Pancreas (tissue), 10 donors: ENCODE measurements at regions of chr9 and their contacts with region 1.

Region 1: DNA sequence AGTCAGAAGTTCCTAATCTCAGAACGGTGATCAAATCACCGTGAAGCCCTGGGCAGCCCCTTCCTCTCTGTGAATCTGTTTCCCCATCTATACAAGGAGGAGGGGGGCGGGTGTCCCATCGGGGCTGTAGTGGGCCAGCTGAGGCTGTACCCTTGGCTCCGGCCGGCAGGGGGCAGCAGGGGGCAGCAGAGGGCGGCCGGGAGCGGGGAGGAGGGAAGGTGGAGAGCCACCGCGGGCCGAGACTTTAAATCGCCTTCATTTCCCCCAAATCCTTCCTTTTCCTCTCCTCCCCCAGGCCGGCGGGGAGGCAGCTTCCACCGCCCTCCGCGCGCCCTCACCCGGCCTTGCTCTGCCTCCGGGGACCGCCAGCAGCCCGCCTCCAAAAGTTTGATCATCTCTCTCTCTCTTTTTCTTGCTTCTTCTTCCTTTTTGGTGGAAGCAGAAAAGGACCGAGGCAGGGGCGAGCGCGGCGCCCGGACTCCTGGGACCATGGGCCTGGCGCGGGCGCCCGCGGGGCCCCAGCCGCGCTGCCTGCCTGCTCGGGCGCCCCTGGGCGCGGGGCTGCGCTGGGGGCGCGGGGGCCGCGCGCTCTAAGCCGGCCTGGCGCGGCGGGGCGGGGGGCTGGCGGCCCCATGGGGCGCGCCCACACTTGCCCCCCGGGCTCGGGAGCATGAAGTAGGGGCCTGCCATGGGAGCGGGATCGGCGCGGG is at the start of gene COL27A1:
- DNase-seq: peak; percentile 78 to 98 (median 87)
- ATAC-seq: peak; percentile 87 to 94 (median 89)
- H3K4me3 ChIP-seq: peak within 1 kb of the TSS; percentile 54 to 79 (median 74)
- H3K27ac ChIP-seq: peak within 1 kb of the TSS in 2 of 4 donors; percentile 48 to 54
- H3K4me1 ChIP-seq: peaks cover 0 to 10% (median 9%) of the 10 kb centered on the region in 3 donors
- H3K27me3 ChIP-seq: peaks cover 0 to 2% (median 0%) of the 10 kb centered on the region in 4 donors
- CTCF ChIP-seq: peak; percentile 79 to 93 (median 90)
- total RNA-seq, gene COL27A1: 9.7 to 31.8 (median 17.3) TPM

Region 2: GRCh38 chr9:114275246-114276004 is 120.0 kb after region 1 on chr9:
- intact Hi-C with region 1: loop called in 1 of 3 experiments (anchors 2 kb)
- DNase-seq: peak in 2 of 6 donors; percentile 38 to 75
- ATAC-seq: no peak
- H3K4me3 ChIP-seq: no peak overlapping the region
- H3K27ac ChIP-seq: no peak overlapping the region
- H3K4me1 ChIP-seq: no peaks in the 10 kb centered on the region
- H3K27me3 ChIP-seq: no peaks in the 10 kb centered on the region
- CTCF ChIP-seq: no peak

Region 3: DNA sequence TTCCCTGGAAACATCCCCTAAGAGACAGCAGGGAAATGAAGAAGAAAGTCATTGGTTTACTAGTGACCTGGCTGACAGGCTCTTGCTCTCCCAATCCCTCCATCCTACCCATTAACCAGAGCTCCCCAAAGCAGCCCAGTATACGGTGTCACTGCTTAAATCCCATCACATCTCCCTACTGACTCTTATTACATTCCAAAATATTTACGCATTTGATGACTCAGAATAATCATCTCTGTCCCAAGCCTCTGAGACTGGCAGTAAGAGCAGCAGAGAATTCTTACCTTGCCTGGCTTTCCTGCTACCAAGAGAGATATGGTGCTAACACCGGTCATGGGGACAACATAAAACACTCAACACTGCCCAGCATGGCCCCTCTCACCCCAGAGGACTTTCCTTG is 370.1 kb after region 1 on chr9:
- intact Hi-C with region 1: no loop called
- DNase-seq: no peak
- ATAC-seq: no peak
- H3K4me3 ChIP-seq: no peak overlapping the region
- H3K27ac ChIP-seq: no peak overlapping the region
- H3K4me1 ChIP-seq: no peaks in the 10 kb centered on the region
- H3K27me3 ChIP-seq: no peaks in the 10 kb centered on the region
- CTCF ChIP-seq: no peak